PC-3 (cell line): ENCODE measurements at regions of chr19 and their contacts with region 1.

Region 1: DNA sequence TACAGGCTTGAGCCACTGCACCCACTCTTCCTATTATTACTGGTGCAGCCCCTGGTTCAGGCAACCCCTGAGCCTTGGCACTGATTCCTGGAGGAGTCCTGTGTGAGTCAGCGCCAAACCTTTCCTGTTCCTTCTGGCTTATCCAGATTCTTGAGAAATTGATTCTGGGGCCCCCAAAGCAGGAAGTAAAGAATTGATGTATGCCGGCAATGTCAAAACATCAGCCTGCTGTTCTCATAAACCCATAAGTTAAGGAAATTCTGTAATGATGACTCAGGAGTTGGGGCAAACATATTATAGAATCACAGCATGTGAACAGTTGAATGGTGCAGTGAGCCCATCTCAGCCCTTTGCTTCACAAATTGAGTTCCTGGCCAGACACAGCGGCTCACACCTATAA is 1.4 kb upstream of the OR7G3 start:
- DNase-seq: peak; percentile 97
- ATAC-seq: peak; percentile 94
- H3K4me3 ChIP-seq: no peak overlapping the region
- H3K27ac ChIP-seq: peak overlapping the region; percentile 41
- H3K4me1 ChIP-seq: peaks cover 19% of the 10 kb centered on the region
- H3K27me3 ChIP-seq: no peaks in the 10 kb centered on the region
- CTCF ChIP-seq: no peak

Region 2: GRCh38 chr19:9054765-9055164 is 73.4 kb before region 1 on chr19:
- CTCF ChIA-PET with region 1: no interaction called
- POLR2A ChIA-PET with region 1: interaction called, 17 read pairs
- intact Hi-C with region 1: no loop called
- DNase-seq: peak; percentile 95
- ATAC-seq: peak; percentile 85
- H3K4me3 ChIP-seq: peak overlapping the region; percentile 42; the same call in 1 of the 2 replicates
- H3K27ac ChIP-seq: peak overlapping the region; percentile 94
- H3K4me1 ChIP-seq: peaks cover 31% of the 10 kb centered on the region
- H3K27me3 ChIP-seq: no peaks in the 10 kb centered on the region
- CTCF ChIP-seq: no peak

Region 3: GRCh38 chr19:9109959-9110358 is 18.2 kb before region 1 on chr19:
- CTCF ChIA-PET with region 1: no interaction called
- POLR2A ChIA-PET with region 1: no interaction called
- intact Hi-C with region 1: loop called (anchors 2 kb)
- DNase-seq: no peak
- ATAC-seq: no peak
- H3K4me3 ChIP-seq: no peak overlapping the region
- H3K27ac ChIP-seq: no peak overlapping the region
- H3K4me1 ChIP-seq: no peaks in the 10 kb centered on the region; the same call in 1 of the 2 replicates
- H3K27me3 ChIP-seq: peaks cover 36% of the 10 kb centered on the region
- CTCF ChIP-seq: no peak

Region 4: DNA sequence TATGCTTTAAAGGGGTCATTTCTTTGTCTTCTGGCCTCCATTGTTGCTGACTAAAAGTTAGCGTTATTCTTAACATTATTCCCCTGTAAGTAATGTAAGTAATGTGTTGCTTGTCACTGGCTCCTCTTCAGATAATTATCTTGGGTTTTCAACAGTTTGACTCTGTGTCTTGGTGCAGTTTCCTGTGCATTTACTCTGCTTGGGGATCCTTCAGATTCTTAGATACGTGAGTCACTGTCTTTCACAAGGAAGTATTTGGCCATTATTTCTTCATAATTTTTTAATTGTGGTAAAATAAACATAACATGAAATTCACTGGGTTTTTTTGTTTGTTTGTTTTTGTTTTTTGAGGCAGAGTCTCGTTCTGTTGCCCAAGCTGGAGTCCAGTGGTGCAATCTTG is 37.1 kb after region 1 on chr19:
- CTCF ChIA-PET with region 1: no interaction called
- POLR2A ChIA-PET with region 1: no interaction called
- intact Hi-C with region 1: no loop called
- DNase-seq: no peak
- ATAC-seq: peak; percentile 24; the same call in 1 of the 2 replicates
- H3K4me3 ChIP-seq: no peak overlapping the region
- H3K27ac ChIP-seq: no peak overlapping the region
- H3K4me1 ChIP-seq: no peaks in the 10 kb centered on the region
- H3K27me3 ChIP-seq: no peaks in the 10 kb centered on the region
- CTCF ChIP-seq: no peak